ENCODE measurements at regions of chr15 and their contacts with region 1.

Region 1: GRCh38 chr15:63599401-63600000 is 2.3 kb downstream of the FBXL22 start:
- DNase-seq: peak; percentile 82
- ATAC-seq: peak; percentile 69

Region 2: GRCh38 chr15:63322541-63322940 is 277.0 kb before region 1 on chr15:
- intact Hi-C with region 1: no loop called
- DNase-seq: no peak
- ATAC-seq: no peak

Region 3: DNA sequence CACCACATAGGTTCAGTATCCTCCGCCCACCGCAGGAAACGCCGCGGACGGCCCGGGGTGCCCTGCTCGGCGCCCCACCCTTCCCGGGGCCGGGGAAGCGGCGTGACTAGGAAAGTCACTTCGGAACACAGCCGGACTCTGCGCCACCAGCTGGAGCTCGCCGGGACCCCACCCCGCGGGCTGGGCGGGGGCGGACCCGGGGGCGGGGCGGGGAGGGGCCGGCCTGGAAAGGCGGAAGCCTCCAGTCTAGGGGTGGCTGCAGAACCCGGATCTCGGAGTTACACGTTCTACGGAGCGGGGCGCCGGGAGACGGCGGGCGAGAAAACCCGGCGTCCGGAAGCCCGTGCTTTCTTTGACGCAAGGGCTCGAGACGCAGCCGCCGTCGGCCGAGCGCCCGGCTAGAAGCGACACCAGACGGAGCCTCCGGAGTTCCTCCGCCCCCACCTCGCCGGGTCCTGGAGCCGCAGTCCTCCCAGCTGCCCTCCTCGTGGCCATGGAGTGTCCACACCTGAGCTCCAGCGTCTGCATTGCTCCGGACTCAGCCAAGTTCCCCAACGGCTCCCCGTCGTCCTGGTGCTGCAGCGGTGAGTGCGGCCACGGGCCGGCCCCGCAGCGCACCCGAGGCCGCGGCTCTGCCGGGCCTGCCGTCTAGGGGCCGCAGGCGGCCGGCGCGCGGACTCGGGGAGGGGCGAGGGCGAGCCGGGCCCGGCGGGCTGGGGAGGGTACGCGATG is 95.1 kb before region 1 on chr15 and contains the start of gene USP3:
- intact Hi-C with region 1: loop called (anchors 10 kb)
- DNase-seq: peak; percentile 95
- ATAC-seq: peak; percentile 93
- total RNA-seq, gene USP3: 58.2 TPM